ENCODE measurements at regions of chr10 and their contacts with region 1.

Region 1: GRCh38 chr10:68955832-68956532 is at the start of gene DDX21:
- DNase-seq: peak; percentile 93
- ATAC-seq: peak; percentile 82
- H3K4me3 ChIP-seq: peak within 1 kb of the TSS; percentile 92 to 99 (median 95)
- H3K4me3 Mint-ChIP-seq: peak within 1 kb of the TSS; percentile 94
- H3K27ac ChIP-seq: peak within 1 kb of the TSS; percentile 97 to 99
- H3K27ac Mint-ChIP-seq: peak within 1 kb of the TSS; percentile 95
- H3K4me1 ChIP-seq: peaks cover 7 to 32% of the 10 kb centered on the region in 2 donors
- H3K4me1 Mint-ChIP-seq: peaks cover 34% of the 10 kb centered on the region
- H3K27me3 ChIP-seq: no peaks in the 10 kb centered on the region
- H3K27me3 Mint-ChIP-seq: no peaks in the 10 kb centered on the region
- CTCF ChIP-seq: peak; percentile 88
- total RNA-seq, gene DDX21: 40.5 and 43.5 TPM in 2 replicates

Region 2: GRCh38 chr10:68074775-68075549 is 881.0 kb before region 1 on chr10 and contains the start of gene HERC4:
- CTCF ChIA-PET with region 1: no interaction called
- POLR2A ChIA-PET with region 1: no interaction called
- intact Hi-C with region 1: loop called (anchors 5 kb)
- DNase-seq: peak; percentile 96
- ATAC-seq: peak; percentile 88
- H3K4me3 ChIP-seq: peak within 1 kb of the TSS; percentile 83 to 95 (median 90)
- H3K4me3 Mint-ChIP-seq: peak within 1 kb of the TSS; percentile 95
- H3K27ac ChIP-seq: peak within 1 kb of the TSS; percentile 99 to 100
- H3K27ac Mint-ChIP-seq: peak within 1 kb of the TSS; percentile 98
- H3K4me1 ChIP-seq: peaks cover 13 to 33% of the 10 kb centered on the region in 2 donors
- H3K4me1 Mint-ChIP-seq: peaks cover 38% of the 10 kb centered on the region
- H3K27me3 ChIP-seq: no peaks in the 10 kb centered on the region
- H3K27me3 Mint-ChIP-seq: no peaks in the 10 kb centered on the region
- CTCF ChIP-seq: no peak
- total RNA-seq, gene HERC4: 118 and 126 TPM in 2 replicates

Region 3: DNA sequence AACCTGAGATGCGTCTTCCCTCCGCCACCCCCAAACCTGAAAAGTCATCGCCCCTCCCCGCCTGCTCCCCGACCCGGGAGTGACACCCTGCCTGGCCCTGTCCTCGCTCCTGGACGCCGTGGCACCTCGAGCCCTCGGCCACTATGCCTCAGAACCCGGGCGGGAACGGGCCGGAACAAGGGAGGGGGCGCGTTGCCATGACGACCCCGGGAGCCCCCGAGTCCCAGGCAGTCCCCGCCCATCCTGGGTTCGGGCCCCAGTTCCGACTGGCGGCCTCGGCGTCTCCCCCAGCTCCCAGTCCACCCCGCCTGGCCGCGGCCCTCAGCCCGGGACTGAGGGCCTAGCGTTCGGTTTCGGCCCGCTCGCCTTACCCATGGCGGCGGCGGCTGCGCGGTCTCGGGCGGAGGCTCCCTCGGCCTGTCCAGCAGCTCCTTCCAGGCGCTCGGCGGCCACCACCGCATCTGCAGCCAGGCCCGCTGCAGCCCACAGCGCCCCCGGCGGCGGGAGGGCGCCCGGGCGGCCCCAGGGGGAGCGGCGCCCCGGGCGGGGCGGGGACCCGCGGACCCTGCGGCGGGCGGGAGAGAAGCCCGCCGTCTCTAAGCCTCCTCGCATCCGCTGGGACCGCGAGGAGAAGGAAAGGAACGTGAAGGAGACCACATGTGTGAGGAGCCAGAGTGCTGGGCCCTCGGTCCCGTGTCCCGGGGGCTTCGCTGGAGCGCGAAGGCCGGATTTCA is 549.0 kb before region 1 on chr10 and contains the start of gene RUFY2:
- CTCF ChIA-PET with region 1: no interaction called
- POLR2A ChIA-PET with region 1: no interaction called
- intact Hi-C with region 1: loop called (anchors 10 kb)
- DNase-seq: peak; percentile 91
- ATAC-seq: peak; percentile 93
- H3K4me3 ChIP-seq: peak within 1 kb of the TSS; percentile 79 to 94 (median 91)
- H3K4me3 Mint-ChIP-seq: peak within 1 kb of the TSS; percentile 92
- H3K27ac ChIP-seq: peak within 1 kb of the TSS; percentile 51 to 83
- H3K27ac Mint-ChIP-seq: peak within 1 kb of the TSS; percentile 89
- H3K4me1 ChIP-seq: peaks cover 6 to 9% of the 10 kb centered on the region in 2 donors
- H3K4me1 Mint-ChIP-seq: peaks cover 22% of the 10 kb centered on the region
- H3K27me3 ChIP-seq: no peaks in the 10 kb centered on the region
- H3K27me3 Mint-ChIP-seq: no peaks in the 10 kb centered on the region
- CTCF ChIP-seq: peak; percentile 73
- total RNA-seq, gene RUFY2: 38.7 and 41.6 TPM in 2 replicates

Region 4: DNA sequence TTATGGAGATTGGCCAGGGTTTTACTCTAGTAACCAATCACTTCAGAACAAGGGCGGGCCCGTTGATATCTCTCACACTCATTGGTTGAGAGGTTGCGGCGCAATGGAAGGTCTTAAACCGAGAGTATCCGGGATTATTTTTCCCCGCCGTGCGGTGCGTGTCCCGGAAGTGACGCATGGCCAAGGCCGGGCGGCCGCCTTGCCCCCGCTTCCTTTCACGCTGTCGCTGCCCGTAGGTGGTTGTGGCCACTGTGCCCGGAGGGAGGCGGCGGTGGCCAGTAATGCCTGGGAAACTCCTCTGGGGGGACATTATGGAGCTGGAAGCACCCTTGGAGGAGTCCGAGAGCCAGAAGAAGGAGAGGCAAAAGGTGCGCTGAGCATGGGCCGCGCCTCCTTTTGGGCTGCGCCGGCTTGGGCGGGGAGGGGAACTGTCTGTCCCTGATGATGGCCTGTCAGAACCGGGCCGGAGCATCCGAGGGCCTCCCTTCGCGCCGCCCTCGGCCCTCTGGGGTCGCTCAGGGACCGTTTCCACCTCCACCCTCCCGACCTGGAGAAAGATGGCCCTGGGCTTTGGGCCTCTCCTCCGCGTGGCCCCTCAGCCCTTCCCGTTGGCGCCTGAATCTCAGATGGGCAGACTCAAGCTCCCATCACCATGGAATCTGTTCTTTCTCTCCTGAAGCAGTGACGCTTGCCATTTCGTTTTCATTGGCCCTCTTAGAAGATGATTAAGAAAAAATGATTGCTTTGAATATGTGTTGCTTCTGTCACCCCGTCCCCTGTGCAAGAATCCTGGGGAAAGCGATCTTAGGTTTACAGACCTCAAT is 54.7 kb before region 1 on chr10 and contains the start of gene DDX50:
- CTCF ChIA-PET with region 1: interaction called, 6 read pairs
- POLR2A ChIA-PET with region 1: interaction called, 11 read pairs
- intact Hi-C with region 1: no loop called
- DNase-seq: peak; percentile 97
- ATAC-seq: peak; percentile 94
- H3K4me3 ChIP-seq: peak within 1 kb of the TSS; percentile 67 to 97 (median 91)
- H3K4me3 Mint-ChIP-seq: peak within 1 kb of the TSS; percentile 98
- H3K27ac ChIP-seq: peak within 1 kb of the TSS; percentile 97 to 100
- H3K27ac Mint-ChIP-seq: peak within 1 kb of the TSS; percentile 100
- H3K4me1 ChIP-seq: peaks cover 20 to 22% of the 10 kb centered on the region in 2 donors
- H3K4me1 Mint-ChIP-seq: peaks cover 32% of the 10 kb centered on the region
- H3K27me3 ChIP-seq: no peaks in the 10 kb centered on the region
- H3K27me3 Mint-ChIP-seq: peaks cover 3% of the 10 kb centered on the region
- CTCF ChIP-seq: no peak
- total RNA-seq, gene DDX50: 38.6 and 39.3 TPM in 2 replicates

Region 5: GRCh38 chr10:68924593-68924992 is 31.4 kb before region 1 on chr10:
- CTCF ChIA-PET with region 1: no interaction called
- POLR2A ChIA-PET with region 1: no interaction called
- intact Hi-C with region 1: no loop called
- DNase-seq: no peak
- ATAC-seq: no peak
- H3K4me3 ChIP-seq: no peak overlapping the region
- H3K4me3 Mint-ChIP-seq: no peak overlapping the region
- H3K27ac ChIP-seq: no peak overlapping the region
- H3K27ac Mint-ChIP-seq: no peak overlapping the region
- H3K4me1 ChIP-seq: no peaks in the 10 kb centered on the region
- H3K4me1 Mint-ChIP-seq: no peaks in the 10 kb centered on the region
- H3K27me3 ChIP-seq: no peaks in the 10 kb centered on the region
- H3K27me3 Mint-ChIP-seq: no peaks in the 10 kb centered on the region
- CTCF ChIP-seq: no peak

Region 6: GRCh38 chr10:69087590-69088470 is 131.8 kb after region 1 on chr10 and contains the start of gene SRGN:
- CTCF ChIA-PET with region 1: interaction called, 47 read pairs
- POLR2A ChIA-PET with region 1: interaction called, 7 read pairs
- intact Hi-C with region 1: loop called (anchors 1 kb)
- DNase-seq: peak; percentile 78
- ATAC-seq: peak; percentile 68
- H3K4me3 ChIP-seq: peak within 1 kb of the TSS; percentile 40 to 95 (median 64)
- H3K4me3 Mint-ChIP-seq: peak within 1 kb of the TSS; percentile 87
- H3K27ac ChIP-seq: peak within 1 kb of the TSS; percentile 73 to 91
- H3K27ac Mint-ChIP-seq: peak within 1 kb of the TSS; percentile 94
- H3K4me1 ChIP-seq: peaks cover 38 to 39% of the 10 kb centered on the region in 2 donors
- H3K4me1 Mint-ChIP-seq: peaks cover 55% of the 10 kb centered on the region
- H3K27me3 ChIP-seq: no peaks in the 10 kb centered on the region
- H3K27me3 Mint-ChIP-seq: no peaks in the 10 kb centered on the region
- CTCF ChIP-seq: no peak
- total RNA-seq, gene SRGN: 47.3 and 49.9 TPM in 2 replicates

Region 7: GRCh38 chr10:69179743-69180524 is 224.0 kb after region 1 on chr10 and contains the start of gene SUPV3L1:
- CTCF ChIA-PET with region 1: no interaction called
- POLR2A ChIA-PET with region 1: interaction called, 4 read pairs
- intact Hi-C with region 1: loop called (anchors 1 kb)
- DNase-seq: peak; percentile 96
- ATAC-seq: peak; percentile 87
- H3K4me3 ChIP-seq: peak within 1 kb of the TSS; percentile 79 to 96 (median 94)
- H3K4me3 Mint-ChIP-seq: peak within 1 kb of the TSS; percentile 97
- H3K27ac ChIP-seq: peak within 1 kb of the TSS; percentile 91 to 99
- H3K27ac Mint-ChIP-seq: peak within 1 kb of the TSS; percentile 100
- H3K4me1 ChIP-seq: peaks cover 11 to 18% of the 10 kb centered on the region in 2 donors
- H3K4me1 Mint-ChIP-seq: peaks cover 41% of the 10 kb centered on the region
- H3K27me3 ChIP-seq: no peaks in the 10 kb centered on the region
- H3K27me3 Mint-ChIP-seq: no peaks in the 10 kb centered on the region
- CTCF ChIP-seq: no peak
- total RNA-seq, gene SUPV3L1: 37.1 and 40.4 TPM in 2 replicates

Region 8: GRCh38 chr10:69464801-69465401 is 508.9 kb after region 1 on chr10:
- CTCF ChIA-PET with region 1: no interaction called
- POLR2A ChIA-PET with region 1: no interaction called
- intact Hi-C with region 1: no loop called
- DNase-seq: no peak
- ATAC-seq: no peak
- H3K4me3 ChIP-seq: no peak overlapping the region
- H3K4me3 Mint-ChIP-seq: no peak overlapping the region
- H3K27ac ChIP-seq: no peak overlapping the region
- H3K27ac Mint-ChIP-seq: no peak overlapping the region
- H3K4me1 ChIP-seq: no peaks in the 10 kb centered on the region
- H3K4me1 Mint-ChIP-seq: no peaks in the 10 kb centered on the region
- H3K27me3 ChIP-seq: no peaks in the 10 kb centered on the region
- H3K27me3 Mint-ChIP-seq: peaks cover 2% of the 10 kb centered on the region
- CTCF ChIP-seq: no peak